ENCODE measurements at regions of chr21 and their contacts with region 1.

Region 1: DNA sequence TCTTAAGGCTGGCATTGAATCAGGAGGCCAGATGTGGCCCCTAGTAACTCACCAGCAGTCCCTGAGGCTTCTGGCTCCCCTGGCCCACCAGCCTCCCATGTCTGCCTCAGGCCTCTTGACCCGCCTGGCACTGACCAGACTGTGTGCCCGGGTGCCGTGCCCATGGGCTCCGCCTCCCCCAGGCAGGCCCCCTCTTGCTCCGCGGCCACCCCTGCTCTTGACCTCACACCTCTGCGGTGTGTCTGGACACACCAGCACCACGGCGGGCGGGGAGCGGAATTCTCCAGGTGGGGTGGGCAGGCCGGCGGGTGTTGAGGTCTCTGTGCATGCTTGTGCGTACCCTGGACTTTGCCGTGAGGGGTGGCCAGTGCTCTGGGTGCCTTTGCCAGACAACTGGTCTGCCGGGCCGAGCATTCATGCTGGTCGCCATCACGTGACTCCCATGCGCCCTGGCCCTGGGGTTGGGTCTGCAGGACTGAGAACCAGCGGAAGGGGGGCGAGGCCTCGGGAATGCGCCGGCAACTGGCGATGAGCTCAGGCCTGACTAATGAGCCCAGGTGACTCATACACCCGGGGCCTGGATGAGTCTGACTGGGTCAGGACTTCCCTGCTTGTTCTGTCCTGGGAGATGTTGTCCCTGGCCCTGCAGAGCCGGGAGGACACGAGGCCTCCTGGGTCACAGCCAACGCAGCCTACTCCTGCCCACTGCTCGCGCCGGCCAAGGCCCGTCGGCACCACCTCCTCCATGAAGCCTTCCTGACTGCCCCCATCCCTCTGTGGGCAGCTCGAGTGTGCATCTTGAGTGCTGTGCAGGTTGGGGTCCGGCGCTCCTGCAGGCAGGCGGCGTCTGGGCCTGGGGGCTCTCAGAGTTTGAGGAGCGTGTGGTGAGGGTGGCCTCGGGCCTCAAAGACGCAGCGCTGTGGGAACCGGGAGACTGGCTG is 22.6 kb downstream of the COL18A1 start:
- DNase-seq: peak; percentile 58 to 66
- H3K4me3 ChIP-seq: no peak overlapping the region
- H3K27ac ChIP-seq: peak overlapping the region in 1 of 3 donors; percentile 59
- H3K4me1 ChIP-seq: peaks cover 25 to 54% of the 10 kb centered on the region in 2 donors
- H3K27me3 ChIP-seq: no peaks in the 10 kb centered on the region
- CTCF ChIP-seq: no peak
- POLR2A ChIP-seq: no peak

Region 2: DNA sequence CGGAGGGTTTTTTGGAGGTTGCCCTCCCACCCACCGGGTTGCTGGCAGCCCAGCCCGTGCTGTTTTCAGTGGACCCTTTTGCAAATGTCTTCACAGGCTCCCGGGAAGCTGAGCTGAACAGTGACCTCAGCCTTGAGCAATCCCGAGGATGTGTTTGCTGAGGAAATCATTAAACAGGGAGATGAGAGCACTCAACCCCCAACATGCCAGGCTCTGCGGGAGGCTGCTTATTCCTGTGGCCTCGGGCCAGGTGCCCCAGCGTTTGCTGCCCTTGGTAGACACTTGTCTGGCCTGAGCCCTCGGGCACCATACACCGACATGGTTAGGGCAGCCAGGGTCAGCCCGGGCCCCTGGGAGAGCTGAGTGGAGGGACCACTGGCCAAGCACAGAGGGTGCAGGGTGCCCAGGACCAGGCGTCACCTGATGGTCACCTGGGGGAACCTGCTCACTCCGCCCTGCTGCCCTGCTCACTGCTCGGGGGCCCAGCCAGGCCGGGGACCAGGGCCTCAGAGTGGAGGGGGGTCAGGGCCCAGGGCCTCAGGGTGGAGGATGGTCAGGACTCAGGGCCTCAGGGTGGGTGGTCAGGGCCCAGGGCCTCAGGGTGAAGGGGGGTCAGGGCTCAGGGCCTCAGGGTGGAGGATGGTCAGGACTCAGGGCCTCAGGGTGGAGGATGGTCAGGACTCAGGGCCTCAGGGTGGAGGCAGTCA is 97.4 kb before region 1 on chr21:
- intact Hi-C with region 1: loop called (anchors 10 kb)
- DNase-seq: peak; percentile 95 to 97
- H3K4me3 ChIP-seq: no peak overlapping the region
- H3K27ac ChIP-seq: peak overlapping the region; percentile 81 to 91 (median 85)
- H3K4me1 ChIP-seq: peaks cover 22 to 44% of the 10 kb centered on the region in 2 donors
- H3K27me3 ChIP-seq: no peaks in the 10 kb centered on the region
- CTCF ChIP-seq: no peak
- POLR2A ChIP-seq: peak in 1 of 2 donors; percentile 20

Measured in thyroid gland (tissue), 4 donors.